B cell (primary cell): ENCODE measurements at regions of chr1 and their contacts with region 1.

Region 1: GRCh38 chr1:9196129-9197040 is 38.2 kb upstream of the H6PD start:
- DNase-seq: peak; percentile 81
- ATAC-seq: peak; percentile 78
- H3K4me3 ChIP-seq: no peak overlapping the region
- H3K4me3 Mint-ChIP-seq: peak overlapping the region; percentile 16
- H3K27ac ChIP-seq: no peak overlapping the region
- H3K27ac Mint-ChIP-seq: no peak overlapping the region
- H3K4me1 ChIP-seq: peaks cover 7 to 13% of the 10 kb centered on the region in 2 donors
- H3K4me1 Mint-ChIP-seq: peaks cover 31% of the 10 kb centered on the region
- H3K27me3 ChIP-seq: peaks cover 0 to 38% (median 22%) of the 10 kb centered on the region in 4 experiments
- H3K27me3 Mint-ChIP-seq: peaks cover 32% of the 10 kb centered on the region
- CTCF ChIP-seq: peak; percentile 84

Region 2: GRCh38 chr1:9004700-9005394 is 191.5 kb before region 1 on chr1:
- CTCF ChIA-PET with region 1: interaction called, 12 read pairs
- POLR2A ChIA-PET with region 1: no interaction called
- intact Hi-C with region 1: loop called (anchors 10 kb)
- DNase-seq: peak; percentile 83
- ATAC-seq: peak; percentile 79
- H3K4me3 ChIP-seq: no peak overlapping the region
- H3K4me3 Mint-ChIP-seq: no peak overlapping the region
- H3K27ac ChIP-seq: no peak overlapping the region
- H3K27ac Mint-ChIP-seq: peak overlapping the region; percentile 3
- H3K4me1 ChIP-seq: peaks cover 11 to 26% of the 10 kb centered on the region in 2 donors
- H3K4me1 Mint-ChIP-seq: peaks cover 33% of the 10 kb centered on the region
- H3K27me3 ChIP-seq: peaks cover 0 to 11% (median 2%) of the 10 kb centered on the region in 4 experiments
- H3K27me3 Mint-ChIP-seq: peaks cover 16% of the 10 kb centered on the region
- CTCF ChIP-seq: peak; percentile 91

Region 3: GRCh38 chr1:9145021-9145668 is 51.2 kb before region 1 on chr1:
- CTCF ChIA-PET with region 1: interaction called, 46 read pairs
- POLR2A ChIA-PET with region 1: no interaction called
- intact Hi-C with region 1: loop called (anchors 1 kb)
- DNase-seq: no peak
- ATAC-seq: no peak
- H3K4me3 ChIP-seq: no peak overlapping the region
- H3K4me3 Mint-ChIP-seq: no peak overlapping the region
- H3K27ac ChIP-seq: no peak overlapping the region
- H3K27ac Mint-ChIP-seq: no peak overlapping the region
- H3K4me1 ChIP-seq: no peaks in the 10 kb centered on the region
- H3K4me1 Mint-ChIP-seq: peaks cover 3% of the 10 kb centered on the region
- H3K27me3 ChIP-seq: no peaks in the 10 kb centered on the region
- H3K27me3 Mint-ChIP-seq: no peaks in the 10 kb centered on the region
- CTCF ChIP-seq: no peak

Region 4: DNA sequence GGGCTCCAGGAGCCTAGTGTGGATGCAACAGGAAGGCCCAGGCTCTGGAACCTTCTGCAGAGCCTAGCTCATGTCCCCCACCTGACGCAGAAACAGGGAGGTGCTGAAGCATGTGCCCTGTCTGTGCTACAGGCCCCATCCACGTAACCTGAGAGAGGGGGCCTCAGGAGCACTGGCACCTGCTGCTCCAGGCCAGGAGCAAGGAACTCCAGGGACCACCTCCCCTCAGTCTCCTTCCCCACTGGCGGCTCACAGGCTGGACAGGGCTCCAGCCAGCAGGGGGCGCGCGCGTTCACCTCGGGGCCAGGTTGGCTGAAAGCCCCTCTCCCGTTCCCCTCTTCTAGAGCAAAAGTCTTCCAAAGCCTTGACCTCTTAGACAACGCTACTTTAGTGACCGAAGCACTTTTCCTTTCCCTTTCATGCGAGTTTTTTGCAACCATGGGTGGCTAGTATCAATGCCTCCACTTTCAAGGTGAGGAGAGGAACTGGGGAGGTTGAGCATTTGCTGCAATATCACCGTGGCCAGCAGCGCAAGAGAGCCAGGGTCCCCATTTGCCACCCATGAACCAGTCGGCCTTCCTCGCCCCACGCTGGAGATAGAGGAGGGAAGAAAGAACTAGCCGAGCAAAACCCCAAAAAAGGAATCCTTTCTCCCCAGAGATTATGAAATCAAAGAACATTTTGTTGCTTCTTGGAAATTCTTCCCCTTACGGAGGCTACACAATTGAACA is 15.0 kb before region 1 on chr1:
- CTCF ChIA-PET with region 1: interaction called, 10 read pairs
- POLR2A ChIA-PET with region 1: interaction called, 3 read pairs
- intact Hi-C with region 1: loop called (anchors 1 kb)
- DNase-seq: peak; percentile 75
- ATAC-seq: peak; percentile 62
- H3K4me3 ChIP-seq: peak overlapping the region in 4 of 5 experiments; percentile 15 to 50 (median 44)
- H3K4me3 Mint-ChIP-seq: peak overlapping the region; percentile 82
- H3K27ac ChIP-seq: no peak overlapping the region
- H3K27ac Mint-ChIP-seq: no peak overlapping the region
- H3K4me1 ChIP-seq: peaks cover 17 to 25% of the 10 kb centered on the region in 2 donors
- H3K4me1 Mint-ChIP-seq: peaks cover 18% of the 10 kb centered on the region
- H3K27me3 ChIP-seq: peaks cover 0 to 42% (median 12%) of the 10 kb centered on the region in 4 experiments
- H3K27me3 Mint-ChIP-seq: peaks cover 28% of the 10 kb centered on the region
- CTCF ChIP-seq: peak; percentile 95